ENCODE measurements at regions of chr11 and their contacts with region 1.

Region 1: DNA sequence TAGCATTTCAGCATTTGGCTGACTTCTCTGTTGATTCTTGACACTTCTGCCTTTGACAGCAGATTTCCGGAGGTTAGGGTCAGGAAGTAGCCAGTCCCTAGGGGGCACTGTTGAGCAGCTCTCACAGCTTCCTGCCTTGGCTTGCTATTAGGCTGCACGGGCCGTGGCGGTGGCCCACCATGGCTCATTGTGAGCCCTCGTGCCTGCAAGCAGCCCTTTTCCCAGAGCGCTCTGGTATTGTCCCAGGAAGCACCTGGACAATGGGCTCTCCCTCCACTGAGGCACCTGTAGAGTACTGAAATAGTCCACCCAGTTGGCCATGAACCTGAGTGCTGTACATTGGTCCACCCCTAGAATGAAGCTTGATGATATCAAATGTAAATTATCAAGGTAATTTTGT is 100.2 kb upstream of the GAL start:
- DNase-seq: peak; percentile 72
- ATAC-seq: peak; percentile 74
- H3K4me3 Mint-ChIP-seq: no peak overlapping the region
- H3K27ac Mint-ChIP-seq: no peak overlapping the region
- H3K4me1 Mint-ChIP-seq: peaks cover 14% of the 10 kb centered on the region
- H3K27me3 Mint-ChIP-seq: no peaks in the 10 kb centered on the region

Region 2: DNA sequence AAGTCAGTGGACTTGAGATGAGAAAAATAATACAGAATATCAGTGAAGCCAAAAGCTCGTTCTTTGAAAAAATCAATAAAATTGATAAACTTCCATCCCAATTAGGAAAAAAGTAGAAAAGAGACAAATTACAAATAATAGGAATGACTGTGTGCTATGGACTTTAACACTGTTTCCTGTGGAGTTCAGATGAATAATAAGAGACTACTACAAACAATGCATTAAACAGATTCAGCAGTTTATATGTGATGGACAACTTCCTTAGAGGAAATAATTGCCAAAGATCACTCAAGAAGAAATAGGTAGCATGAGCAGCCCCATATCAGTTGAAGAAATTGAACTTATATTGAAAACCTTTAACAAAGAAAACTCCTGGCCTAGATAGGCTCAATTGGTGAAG is 23.9 kb before region 1 on chr11:
- CTCF ChIA-PET with region 1: no interaction called
- DNase-seq: no peak
- ATAC-seq: no peak
- H3K4me3 Mint-ChIP-seq: no peak overlapping the region
- H3K27ac Mint-ChIP-seq: no peak overlapping the region
- H3K4me1 Mint-ChIP-seq: peaks cover 16% of the 10 kb centered on the region
- H3K27me3 Mint-ChIP-seq: no peaks in the 10 kb centered on the region

Region 3: DNA sequence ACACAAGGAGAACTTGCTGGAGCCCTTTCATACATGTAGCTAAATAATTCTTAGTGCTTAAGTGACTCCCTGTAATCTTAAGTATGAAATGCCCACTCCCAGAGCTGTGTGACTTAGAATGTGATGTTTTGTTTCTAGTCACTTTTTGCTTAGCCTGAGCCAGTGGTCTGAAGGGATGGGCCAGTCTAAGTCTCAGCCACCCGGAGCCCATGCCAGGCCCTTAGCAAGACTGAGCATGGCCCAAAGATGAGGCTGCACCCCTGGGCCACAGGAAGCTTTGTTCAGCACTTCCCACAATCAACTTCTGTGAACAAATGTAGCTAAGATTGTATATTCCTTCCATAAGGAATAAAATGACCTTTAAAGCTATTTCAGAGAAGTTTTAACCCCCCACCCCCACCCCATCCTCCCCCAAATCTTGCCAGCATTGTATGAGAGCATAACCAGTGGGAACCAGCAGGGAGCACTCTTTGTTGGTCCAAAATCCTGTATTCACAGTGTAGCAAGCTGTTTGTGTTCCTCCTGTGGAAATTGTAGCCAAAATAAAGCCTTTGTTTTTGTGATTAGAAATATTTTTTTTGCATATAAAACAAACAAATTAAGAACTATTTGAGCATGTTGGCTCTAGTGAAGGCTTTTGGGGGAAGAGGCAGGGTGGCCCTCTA is 26.5 kb after region 1 on chr11:
- CTCF ChIA-PET with region 1: interaction called, 14 read pairs
- DNase-seq: no peak
- ATAC-seq: no peak
- H3K4me3 Mint-ChIP-seq: no peak overlapping the region
- H3K27ac Mint-ChIP-seq: no peak overlapping the region
- H3K4me1 Mint-ChIP-seq: no peaks in the 10 kb centered on the region
- H3K27me3 Mint-ChIP-seq: no peaks in the 10 kb centered on the region